MCF 10A (cell line): ENCODE measurements at regions of chr21 and their contacts with region 1.

Region 1: GRCh38 chr21:26881504-26882228 is 36.5 kb upstream of the ADAMTS1 start:
- DNase-seq: peak; percentile 26
- H3K4me3 Mint-ChIP-seq: no peak overlapping the region
- H3K27ac Mint-ChIP-seq: no peak overlapping the region
- H3K4me1 Mint-ChIP-seq: no peaks in the 10 kb centered on the region
- H3K27me3 Mint-ChIP-seq: no peaks in the 10 kb centered on the region
- CTCF ChIP-seq: peak; percentile 30

Region 2: GRCh38 chr21:26972192-26972591 is 90.5 kb after region 1 on chr21:
- CTCF ChIA-PET with region 1: no interaction called
- POLR2A ChIA-PET with region 1: no interaction called
- intact Hi-C with region 1: no loop called
- DNase-seq: no peak
- H3K4me3 Mint-ChIP-seq: no peak overlapping the region
- H3K27ac Mint-ChIP-seq: no peak overlapping the region
- H3K4me1 Mint-ChIP-seq: peaks cover 6% of the 10 kb centered on the region
- H3K27me3 Mint-ChIP-seq: no peaks in the 10 kb centered on the region
- CTCF ChIP-seq: no peak

Region 3: GRCh38 chr21:27261676-27262075 is 380.0 kb after region 1 on chr21:
- CTCF ChIA-PET with region 1: no interaction called
- POLR2A ChIA-PET with region 1: no interaction called
- intact Hi-C with region 1: no loop called
- DNase-seq: no peak
- H3K4me3 Mint-ChIP-seq: no peak overlapping the region
- H3K27ac Mint-ChIP-seq: no peak overlapping the region
- H3K4me1 Mint-ChIP-seq: no peaks in the 10 kb centered on the region
- H3K27me3 Mint-ChIP-seq: no peaks in the 10 kb centered on the region
- CTCF ChIP-seq: no peak

Region 4: GRCh38 chr21:27476696-27477095 is 595.0 kb after region 1 on chr21:
- CTCF ChIA-PET with region 1: no interaction called
- POLR2A ChIA-PET with region 1: no interaction called
- intact Hi-C with region 1: loop called (anchors 2 kb)
- DNase-seq: peak; percentile 5
- H3K4me3 Mint-ChIP-seq: no peak overlapping the region
- H3K27ac Mint-ChIP-seq: no peak overlapping the region
- H3K4me1 Mint-ChIP-seq: peaks cover 10% of the 10 kb centered on the region
- H3K27me3 Mint-ChIP-seq: no peaks in the 10 kb centered on the region
- CTCF ChIP-seq: peak; percentile 22